ENCODE measurements at regions of chr19 and their contacts with region 1.

Region 1: GRCh38 chr19:36214386-36215275 is at the starts of genes ZNF146 and ZNF565:
- DNase-seq: peak; percentile 90 to 98 (median 95)
- ATAC-seq: peak; percentile 83
- H3K4me3 ChIP-seq: peak within 1 kb of the TSS; percentile 73 to 85
- H3K4me3 Mint-ChIP-seq: no peak within 1 kb of the TSS
- H3K27ac ChIP-seq: peak within 1 kb of the TSS; percentile 92 to 99
- H3K27ac Mint-ChIP-seq: no peak within 1 kb of the TSS
- H3K4me1 ChIP-seq: peaks cover 22% of the 10 kb centered on the region
- H3K4me1 Mint-ChIP-seq: peaks cover 32% of the 10 kb centered on the region
- H3K27me3 ChIP-seq: no peaks in the 10 kb centered on the region
- H3K27me3 Mint-ChIP-seq: no peaks in the 10 kb centered on the region
- CTCF ChIP-seq: no peak
- total RNA-seq, gene ZNF146: 16.8 to 18.9 TPM
- total RNA-seq, gene ZNF565: 9.4 to 10.8 TPM

Region 2: DNA sequence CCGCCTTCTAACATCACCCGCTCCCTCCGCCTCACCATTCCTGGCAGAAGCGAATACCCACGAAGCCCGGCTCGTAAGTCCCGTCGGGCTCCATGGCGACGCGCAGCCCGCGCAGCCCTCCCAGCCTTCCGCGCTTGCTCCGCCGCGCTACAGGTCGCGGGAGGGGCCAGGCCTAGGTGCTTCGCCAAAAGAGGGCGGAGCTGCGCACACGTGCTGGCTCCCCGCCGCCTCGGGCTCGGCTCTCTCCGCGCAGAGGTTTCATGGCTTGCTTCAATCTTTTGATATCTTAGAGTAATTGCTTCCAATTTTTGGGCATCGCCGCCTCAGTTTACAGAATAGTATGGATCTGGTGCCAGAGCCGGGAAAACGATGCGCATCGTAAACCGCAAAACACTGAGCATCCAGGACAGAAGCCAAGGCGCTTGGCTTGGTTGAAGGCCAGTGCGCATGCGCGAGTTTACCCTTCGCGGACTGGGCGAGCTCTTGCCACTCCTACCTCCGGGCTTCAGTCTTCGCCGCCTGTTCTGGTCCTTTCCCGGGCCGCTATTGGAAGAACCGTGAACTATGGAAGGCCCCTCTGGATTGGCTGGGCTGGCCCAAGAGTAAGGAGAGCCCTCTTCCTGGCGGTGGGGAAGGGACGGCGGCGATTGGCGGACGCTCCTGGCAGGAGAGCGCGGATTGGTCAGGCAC is 99.7 kb before region 1 on chr19 and contains the start of gene POLR2I:
- CTCF ChIA-PET with region 1: no interaction called
- POLR2A ChIA-PET with region 1: interaction called, 17 read pairs
- intact Hi-C with region 1: loop called (anchors 1 kb)
- DNase-seq: peak; percentile 96 to 100 (median 99)
- ATAC-seq: peak; percentile 85
- H3K4me3 ChIP-seq: peak within 1 kb of the TSS; percentile 71 to 73
- H3K4me3 Mint-ChIP-seq: peak within 1 kb of the TSS; percentile 92
- H3K27ac ChIP-seq: peak within 1 kb of the TSS; percentile 77 to 92
- H3K27ac Mint-ChIP-seq: peak within 1 kb of the TSS; percentile 97
- H3K4me1 ChIP-seq: peaks cover 18% of the 10 kb centered on the region
- H3K4me1 Mint-ChIP-seq: peaks cover 39% of the 10 kb centered on the region
- H3K27me3 ChIP-seq: no peaks in the 10 kb centered on the region
- H3K27me3 Mint-ChIP-seq: no peaks in the 10 kb centered on the region
- CTCF ChIP-seq: no peak
- total RNA-seq, gene POLR2I: 27.4 to 34.7 TPM

Region 3: GRCh38 chr19:36198119-36198518 is 16.5 kb before region 1 on chr19:
- CTCF ChIA-PET with region 1: no interaction called
- POLR2A ChIA-PET with region 1: no interaction called
- intact Hi-C with region 1: no loop called
- DNase-seq: no peak
- ATAC-seq: no peak
- H3K4me3 ChIP-seq: no peak overlapping the region
- H3K4me3 Mint-ChIP-seq: no peak overlapping the region
- H3K27ac ChIP-seq: no peak overlapping the region
- H3K27ac Mint-ChIP-seq: no peak overlapping the region
- H3K4me1 ChIP-seq: no peaks in the 10 kb centered on the region
- H3K4me1 Mint-ChIP-seq: no peaks in the 10 kb centered on the region
- H3K27me3 ChIP-seq: no peaks in the 10 kb centered on the region
- H3K27me3 Mint-ChIP-seq: no peaks in the 10 kb centered on the region
- CTCF ChIP-seq: no peak

Region 4: GRCh38 chr19:36363845-36364244 is 149.2 kb after region 1 on chr19:
- CTCF ChIA-PET with region 1: no interaction called
- POLR2A ChIA-PET with region 1: no interaction called
- intact Hi-C with region 1: no loop called
- DNase-seq: no peak
- ATAC-seq: no peak
- H3K4me3 ChIP-seq: no peak overlapping the region
- H3K4me3 Mint-ChIP-seq: no peak overlapping the region
- H3K27ac ChIP-seq: no peak overlapping the region
- H3K27ac Mint-ChIP-seq: no peak overlapping the region
- H3K4me1 ChIP-seq: no peaks in the 10 kb centered on the region
- H3K4me1 Mint-ChIP-seq: peaks cover 2% of the 10 kb centered on the region
- H3K27me3 ChIP-seq: no peaks in the 10 kb centered on the region
- H3K27me3 Mint-ChIP-seq: no peaks in the 10 kb centered on the region
- CTCF ChIP-seq: no peak

Region 5: DNA sequence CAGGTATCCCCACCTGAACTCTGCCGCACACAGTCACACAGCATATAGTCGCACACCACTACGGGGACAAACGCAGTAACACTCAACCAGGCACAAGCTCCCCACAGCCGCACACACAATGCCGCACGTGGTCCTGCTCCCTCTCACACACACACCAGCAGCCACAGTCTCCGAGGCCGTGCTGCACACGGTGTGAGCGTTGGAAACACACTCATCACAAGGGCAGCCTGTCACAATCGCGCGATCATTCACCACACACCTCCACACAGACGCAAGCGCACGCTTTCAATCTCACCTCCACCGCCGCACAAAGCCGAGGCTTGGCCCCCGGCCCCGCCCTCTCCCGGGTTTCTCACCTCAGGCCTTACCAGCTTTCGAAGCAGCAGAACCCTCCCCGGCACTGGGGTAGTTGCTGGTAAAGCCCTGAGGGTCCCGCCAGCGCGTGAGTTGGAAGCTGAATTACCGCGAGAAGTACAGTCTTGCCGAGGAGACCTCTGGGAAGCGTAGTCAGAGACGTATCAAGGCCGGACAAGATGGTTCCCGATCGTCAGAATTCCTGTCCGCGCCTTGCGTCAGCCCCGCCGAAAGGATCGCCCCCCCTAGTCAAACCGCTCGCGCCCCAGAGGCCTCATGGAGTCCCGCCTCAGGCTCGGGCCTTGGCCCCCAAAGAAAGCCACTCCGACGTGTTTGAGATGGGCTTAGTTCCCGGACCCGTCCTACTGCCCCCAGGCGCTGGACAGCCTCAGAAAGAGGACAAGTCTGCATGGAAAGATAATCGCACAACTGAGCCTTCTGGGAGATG is 274.7 kb after region 1 on chr19 and contains the start of gene ZNF566:
- CTCF ChIA-PET with region 1: no interaction called
- POLR2A ChIA-PET with region 1: interaction called, 16 read pairs
- intact Hi-C with region 1: loop called in 1 of 2 experiments (anchors 1 kb)
- DNase-seq: peak; percentile 84 to 98 (median 91)
- ATAC-seq: peak; percentile 88
- H3K4me3 ChIP-seq: peak within 1 kb of the TSS; percentile 84 to 93
- H3K4me3 Mint-ChIP-seq: peak within 1 kb of the TSS; percentile 99
- H3K27ac ChIP-seq: peak within 1 kb of the TSS; percentile 79 to 96
- H3K27ac Mint-ChIP-seq: peak within 1 kb of the TSS; percentile 96
- H3K4me1 ChIP-seq: peaks cover 6% of the 10 kb centered on the region
- H3K4me1 Mint-ChIP-seq: peaks cover 33% of the 10 kb centered on the region
- H3K27me3 ChIP-seq: no peaks in the 10 kb centered on the region
- H3K27me3 Mint-ChIP-seq: no peaks in the 10 kb centered on the region
- CTCF ChIP-seq: no peak
- total RNA-seq, gene ZNF566: 5.8 to 7.0 TPM

Region 6: GRCh38 chr19:36687214-36688056 is 472.8 kb after region 1 on chr19 and contains the start of gene ZNF567:
- CTCF ChIA-PET with region 1: no interaction called
- POLR2A ChIA-PET with region 1: no interaction called
- intact Hi-C with region 1: loop called in 1 of 2 experiments (anchors 10 kb)
- DNase-seq: peak; percentile 91 to 99 (median 98)
- ATAC-seq: peak; percentile 91
- H3K4me3 ChIP-seq: peak within 1 kb of the TSS; percentile 82 to 87
- H3K4me3 Mint-ChIP-seq: peak within 1 kb of the TSS; percentile 99
- H3K27ac ChIP-seq: peak within 1 kb of the TSS; percentile 71 to 81
- H3K27ac Mint-ChIP-seq: peak within 1 kb of the TSS; percentile 96
- H3K4me1 ChIP-seq: peaks cover 18% of the 10 kb centered on the region
- H3K4me1 Mint-ChIP-seq: peaks cover 35% of the 10 kb centered on the region
- H3K27me3 ChIP-seq: no peaks in the 10 kb centered on the region
- H3K27me3 Mint-ChIP-seq: no peaks in the 10 kb centered on the region
- CTCF ChIP-seq: no peak
- total RNA-seq, gene ZNF567: 10.7 to 11.1 TPM

Region 7: DNA sequence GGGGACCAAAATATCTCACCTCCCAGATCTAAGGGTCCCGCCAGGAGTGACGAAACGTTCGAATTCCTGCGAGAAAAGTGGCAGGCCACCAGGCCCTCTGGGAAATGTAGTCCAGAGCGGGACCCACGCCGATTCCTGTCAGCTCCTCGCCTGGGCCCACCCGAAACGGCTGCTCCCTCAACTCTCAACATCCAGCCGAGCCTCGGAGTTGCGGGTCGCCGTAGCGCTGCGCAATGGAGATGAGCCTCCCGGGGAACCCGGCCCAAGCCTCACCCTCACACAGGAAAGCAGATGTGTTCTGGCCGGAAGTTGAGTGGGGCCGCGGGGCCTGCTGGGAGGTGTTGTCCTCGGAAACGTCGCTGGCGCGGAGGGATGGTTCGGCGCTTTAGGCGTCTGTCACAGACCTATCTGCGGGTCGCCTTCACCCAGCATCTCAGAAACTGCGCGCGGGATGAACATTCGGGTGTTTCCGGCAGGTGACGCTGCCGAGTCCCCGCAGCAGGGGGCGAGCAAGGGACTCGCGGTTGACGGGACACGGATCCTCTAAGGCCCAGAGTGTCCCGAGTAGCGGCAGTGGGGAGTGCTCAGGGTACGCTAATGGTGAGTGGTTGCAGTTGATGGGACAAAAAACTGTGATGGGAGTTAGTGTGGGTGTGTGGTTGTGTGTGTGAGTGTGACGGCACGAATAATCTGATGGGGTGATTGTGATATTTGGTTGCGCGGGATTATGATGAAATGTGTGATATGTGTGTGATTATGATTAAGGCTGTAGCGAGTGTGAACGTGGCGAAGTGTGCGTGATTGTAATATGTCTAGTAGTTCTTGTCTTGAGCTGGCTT is 701.6 kb after region 1 on chr19 and contains the starts of genes ZNF568 and ZNF829:
- CTCF ChIA-PET with region 1: no interaction called
- POLR2A ChIA-PET with region 1: no interaction called
- intact Hi-C with region 1: loop called in 1 of 2 experiments (anchors 10 kb)
- DNase-seq: peak; percentile 82 to 97 (median 92)
- ATAC-seq: peak; percentile 97
- H3K4me3 ChIP-seq: peak within 1 kb of the TSS; percentile 75 to 79
- H3K4me3 Mint-ChIP-seq: peak within 1 kb of the TSS; percentile 89
- H3K27ac ChIP-seq: peak within 1 kb of the TSS; percentile 80 to 95
- H3K27ac Mint-ChIP-seq: peak within 1 kb of the TSS; percentile 95
- H3K4me1 ChIP-seq: peaks cover 10% of the 10 kb centered on the region
- H3K4me1 Mint-ChIP-seq: peaks cover 36% of the 10 kb centered on the region
- H3K27me3 ChIP-seq: no peaks in the 10 kb centered on the region
- H3K27me3 Mint-ChIP-seq: no peaks in the 10 kb centered on the region
- CTCF ChIP-seq: peak; percentile 91
- total RNA-seq, gene ZNF568: 4.6 to 5.5 TPM
- total RNA-seq, gene ZNF829: 6.1 to 6.2 TPM

Region 8: DNA sequence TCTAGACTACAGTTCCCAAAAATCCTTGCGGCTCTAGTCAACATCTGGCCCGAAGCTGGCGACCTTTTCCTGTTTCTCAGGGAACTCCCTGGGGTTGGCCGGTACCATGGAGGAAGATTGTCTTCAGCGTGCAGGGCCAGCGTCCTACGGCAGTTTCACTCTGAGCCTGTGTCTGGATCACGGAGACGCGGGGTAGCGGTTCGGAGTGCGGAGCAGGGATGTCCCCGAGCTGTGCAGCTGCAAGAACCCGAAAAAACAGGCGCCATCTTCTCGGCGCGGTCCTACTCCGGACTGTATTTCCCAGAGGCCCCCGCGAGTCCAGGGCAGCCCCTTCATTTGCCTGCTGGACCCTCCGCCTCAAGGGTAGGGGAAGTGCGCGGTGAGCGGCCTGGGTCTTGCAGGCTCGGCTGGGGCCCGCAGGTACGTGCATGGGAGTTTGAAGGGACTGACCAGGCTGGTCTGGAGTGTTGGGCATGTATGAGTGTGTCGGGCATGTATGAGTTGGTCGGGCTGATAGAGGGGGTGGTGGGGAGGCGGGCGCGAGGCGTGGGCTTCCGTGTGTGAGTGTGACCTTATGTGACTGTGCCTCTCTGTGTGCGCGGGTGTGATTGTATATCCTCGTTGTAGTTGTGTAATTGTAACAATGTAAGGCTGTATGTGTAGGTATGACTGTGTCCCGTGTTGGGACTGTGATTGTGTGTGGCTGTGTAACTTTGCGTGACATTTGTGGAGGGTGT is 1003.4 kb after region 1 on chr19 and contains the start of gene ZNF383:
- CTCF ChIA-PET with region 1: no interaction called
- POLR2A ChIA-PET with region 1: interaction called, 7 read pairs
- intact Hi-C with region 1: loop called (anchors 2 to 10 kb)
- DNase-seq: peak; percentile 68 to 92 (median 82)
- ATAC-seq: peak; percentile 88
- H3K4me3 ChIP-seq: peak within 1 kb of the TSS; percentile 71 to 92
- H3K4me3 Mint-ChIP-seq: peak within 1 kb of the TSS; percentile 87
- H3K27ac ChIP-seq: peak within 1 kb of the TSS; percentile 69 to 92
- H3K27ac Mint-ChIP-seq: peak within 1 kb of the TSS; percentile 93
- H3K4me1 ChIP-seq: peaks cover 11% of the 10 kb centered on the region
- H3K4me1 Mint-ChIP-seq: peaks cover 31% of the 10 kb centered on the region
- H3K27me3 ChIP-seq: no peaks in the 10 kb centered on the region
- H3K27me3 Mint-ChIP-seq: no peaks in the 10 kb centered on the region
- CTCF ChIP-seq: no peak
- total RNA-seq, gene ZNF383: 17.5 to 18.9 TPM

Measured in CD8-positive, alpha-beta T cell (primary cell).